ENCODE measurements at regions of chr16 and their contacts with region 1.

Region 1: DNA sequence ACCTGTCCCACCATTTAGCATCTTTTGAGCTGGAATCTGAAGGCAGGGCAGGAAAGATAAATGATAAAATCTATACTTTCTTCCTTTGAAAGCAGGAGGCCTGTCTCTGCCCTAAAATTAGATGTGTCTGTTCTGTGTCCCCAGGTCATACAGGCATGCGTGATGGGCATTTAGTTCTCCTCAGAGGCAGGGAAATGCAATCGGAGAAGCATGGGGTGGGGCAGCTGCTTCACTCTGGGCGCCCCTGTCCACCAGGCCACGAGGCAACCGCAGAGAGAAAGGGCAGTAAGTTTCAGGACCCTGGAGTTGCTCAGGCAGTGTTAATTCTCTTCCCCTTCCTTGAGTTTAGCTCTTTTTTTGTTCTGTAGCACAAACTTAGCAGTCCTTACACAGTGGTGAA is 25.1 kb downstream of the CLUAP1 start:
- DNase-seq: no peak
- H3K4me3 ChIP-seq: no peak overlapping the region
- H3K27me3 ChIP-seq: no peaks in the 10 kb centered on the region
- CTCF ChIP-seq: no peak

Region 2: GRCh38 chr16:3305109-3306068 is 220.6 kb before region 1 on chr16 and contains the starts of genes TIGD7 and ZNF75A:
- CTCF ChIA-PET with region 1: no interaction called
- POLR2A ChIA-PET with region 1: no interaction called
- DNase-seq: peak; percentile 47
- H3K4me3 ChIP-seq: peak within 1 kb of the TSS; percentile 60
- H3K27me3 ChIP-seq: no peaks in the 10 kb centered on the region
- CTCF ChIP-seq: no peak
- polyA plus RNA-seq, gene TIGD7: 2.0 and 3.7 TPM in 2 replicates
- polyA plus RNA-seq, gene ZNF75A: 9.6 and 13.6 TPM in 2 replicates

Region 3: GRCh38 chr16:3317315-3317999 is 208.5 kb before region 1 on chr16:
- CTCF ChIA-PET with region 1: no interaction called
- POLR2A ChIA-PET with region 1: no interaction called
- DNase-seq: no peak
- H3K4me3 ChIP-seq: no peak overlapping the region
- H3K27me3 ChIP-seq: no peaks in the 10 kb centered on the region
- CTCF ChIP-seq: no peak

Region 4: DNA sequence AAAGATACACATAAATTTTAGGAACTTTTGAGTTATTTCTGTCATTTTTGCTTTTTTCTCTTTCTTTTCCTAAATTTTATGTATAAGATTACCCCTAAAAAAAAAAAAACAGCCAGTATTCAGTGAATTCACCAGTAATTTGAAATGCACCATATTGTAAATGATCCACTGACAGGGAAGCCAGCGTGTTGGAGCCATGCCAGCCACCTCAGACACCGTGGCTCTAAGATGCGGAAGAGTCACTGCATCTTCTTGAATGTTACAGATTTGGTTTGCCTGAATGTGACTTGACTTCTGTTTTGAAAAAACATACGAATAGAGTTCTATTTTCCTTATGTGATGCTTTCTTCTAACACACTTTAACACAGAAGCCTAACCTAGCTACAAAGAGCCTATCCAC is 12.3 kb after region 1 on chr16:
- CTCF ChIA-PET with region 1: interaction called, 11 read pairs
- POLR2A ChIA-PET with region 1: no interaction called
- DNase-seq: no peak
- H3K4me3 ChIP-seq: no peak overlapping the region
- H3K27me3 ChIP-seq: no peaks in the 10 kb centered on the region
- CTCF ChIP-seq: no peak

Region 5: GRCh38 chr16:3578610-3579551 is 52.9 kb after region 1 on chr16:
- CTCF ChIA-PET with region 1: no interaction called
- POLR2A ChIA-PET with region 1: no interaction called
- DNase-seq: no peak
- H3K4me3 ChIP-seq: no peak overlapping the region
- H3K27me3 ChIP-seq: no peaks in the 10 kb centered on the region
- CTCF ChIP-seq: no peak

Region 6: GRCh38 chr16:3819746-3820724 is 294.1 kb after region 1 on chr16:
- CTCF ChIA-PET with region 1: no interaction called
- POLR2A ChIA-PET with region 1: no interaction called
- DNase-seq: peak; percentile 52
- H3K4me3 ChIP-seq: no peak overlapping the region
- H3K27me3 ChIP-seq: no peaks in the 10 kb centered on the region
- CTCF ChIP-seq: no peak